GM18951 (cell line): ENCODE measurements at regions of chr17 and their contacts with region 1.

Region 1: GRCh38 chr17:36629252-36629847 is 28.0 kb downstream of the MRM1 start:
- POLR2A ChIP-seq: no peak

Region 2: DNA sequence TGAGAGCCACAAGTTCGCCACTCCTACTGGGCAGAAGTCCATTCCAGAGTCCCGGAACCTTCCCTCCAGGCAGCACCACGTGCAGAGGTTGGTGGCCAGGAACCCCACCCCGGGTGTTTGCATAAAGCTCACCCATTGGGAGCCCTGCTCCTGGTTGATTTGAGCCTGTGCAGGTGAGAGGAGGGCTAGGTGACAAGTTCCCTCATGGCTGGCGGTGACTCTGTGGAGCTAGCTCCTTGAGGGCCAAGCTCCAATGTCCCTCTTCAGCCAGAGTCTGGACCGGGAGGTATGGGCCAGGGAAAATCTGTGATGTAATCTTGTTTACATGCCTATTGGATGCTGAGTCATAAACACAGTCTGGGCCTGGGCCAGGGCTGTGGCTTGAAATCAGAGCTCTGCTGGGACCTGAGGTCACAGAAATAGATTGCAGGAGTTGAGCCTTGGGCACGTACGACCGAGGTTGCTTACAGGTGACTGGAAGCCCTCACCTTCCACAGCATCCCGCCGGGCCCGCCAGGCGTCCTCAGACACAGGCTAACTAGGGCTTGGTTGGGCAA is 438.3 kb after region 1 on chr17:
- in situ Hi-C with region 1: loop called (anchors 25 kb)
- POLR2A ChIP-seq: no peak

Region 3: DNA sequence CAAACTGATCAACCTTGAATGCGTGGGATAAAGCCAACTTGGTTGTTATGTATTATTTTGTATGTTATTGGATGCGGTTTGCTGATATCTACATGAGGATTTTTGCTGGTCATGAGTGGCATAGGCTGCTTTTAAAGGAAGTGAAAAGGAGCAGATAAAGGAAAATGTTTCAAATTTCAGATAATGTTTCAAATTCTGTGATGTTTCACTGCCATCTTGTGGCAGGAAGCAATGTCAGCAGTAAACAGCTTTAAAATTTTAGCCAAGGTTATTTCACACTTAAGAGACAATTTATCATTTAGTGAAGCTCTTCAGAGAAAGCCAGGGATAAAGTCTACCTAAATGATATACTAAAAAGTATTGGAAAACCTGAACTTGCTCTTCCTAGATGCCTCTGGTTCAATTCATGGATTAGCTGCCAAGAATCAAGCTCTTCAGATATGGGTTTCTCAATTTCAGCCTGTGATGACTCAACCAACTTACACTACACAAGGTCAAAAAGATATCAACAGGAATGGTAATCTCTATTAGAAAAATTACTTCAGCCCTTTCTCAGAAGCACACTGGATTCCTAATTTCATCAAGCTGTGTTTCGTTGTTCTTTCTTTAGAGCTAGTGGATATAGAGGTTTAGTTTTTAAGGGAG is 610.5 kb after region 1 on chr17:
- in situ Hi-C with region 1: loop called (anchors 25 kb)
- POLR2A ChIP-seq: no peak